ENCODE measurements at regions of chr3 and their contacts with region 1.

Region 1: GRCh38 chr3:141575879-141576743 is 89.3 kb downstream of the RASA2 start:
- DNase-seq: peak in 4 of 9 donors; percentile 14 to 44 (median 41)
- ATAC-seq: peak; percentile 82
- H3K4me3 ChIP-seq: no peak overlapping the region
- H3K4me3 Mint-ChIP-seq: peak overlapping the region in 8 of 10 donors; percentile 7 to 64 (median 48)
- H3K27ac ChIP-seq: peak overlapping the region; percentile 47
- H3K27ac Mint-ChIP-seq: peak overlapping the region; percentile 36 to 88 (median 69)
- H3K4me1 ChIP-seq: no peaks in the 10 kb centered on the region
- H3K4me1 Mint-ChIP-seq: peaks cover 8 to 17% (median 12%) of the 10 kb centered on the region in 7 donors
- H3K27me3 ChIP-seq: no peaks in the 10 kb centered on the region
- H3K27me3 Mint-ChIP-seq: no peaks in the 10 kb centered on the region

Region 2: GRCh38 chr3:141105828-141106628 is 470.1 kb before region 1 on chr3:
- CTCF ChIA-PET with region 1: no interaction called
- POLR2A ChIA-PET with region 1: no interaction called
- intact Hi-C with region 1: no loop called
- DNase-seq: peak in 8 of 9 donors; percentile 21 to 61 (median 50)
- ATAC-seq: peak; percentile 72
- H3K4me3 ChIP-seq: no peak overlapping the region
- H3K4me3 Mint-ChIP-seq: no peak overlapping the region
- H3K27ac ChIP-seq: no peak overlapping the region
- H3K27ac Mint-ChIP-seq: no peak overlapping the region
- H3K4me1 ChIP-seq: no peaks in the 10 kb centered on the region
- H3K4me1 Mint-ChIP-seq: peaks cover 0 to 5% (median 0%) of the 10 kb centered on the region in 7 donors
- H3K27me3 ChIP-seq: no peaks in the 10 kb centered on the region
- H3K27me3 Mint-ChIP-seq: peaks cover 0 to 6% (median 0%) of the 10 kb centered on the region in 5 donors

Region 3: DNA sequence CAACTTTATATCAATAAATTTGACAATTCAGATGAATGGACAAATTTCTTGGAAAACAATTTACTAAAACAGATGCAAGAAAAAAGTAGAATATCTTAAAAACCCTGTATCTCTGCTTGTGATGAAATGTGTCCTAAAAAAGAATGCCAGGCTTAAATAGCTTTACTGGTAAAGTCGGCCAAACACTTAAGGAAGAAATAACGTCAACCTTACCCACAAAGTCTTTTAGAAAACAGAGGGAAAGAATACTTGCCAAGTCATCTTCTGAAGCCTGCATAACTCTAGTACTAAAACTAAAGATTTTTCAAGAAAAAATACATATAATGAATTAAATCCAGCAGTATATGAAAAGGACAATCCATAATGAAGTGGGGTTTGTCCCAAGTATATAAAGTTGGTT is 21.8 kb after region 1 on chr3:
- CTCF ChIA-PET with region 1: interaction called, 3 read pairs
- POLR2A ChIA-PET with region 1: no interaction called
- intact Hi-C with region 1: loop called in 1 of 2 experiments (anchors 2 kb)
- DNase-seq: no peak
- ATAC-seq: no peak
- H3K4me3 ChIP-seq: no peak overlapping the region
- H3K4me3 Mint-ChIP-seq: no peak overlapping the region
- H3K27ac ChIP-seq: no peak overlapping the region
- H3K27ac Mint-ChIP-seq: peak overlapping the region in 3 of 9 donors; percentile 49 to 64 (median 57)
- H3K4me1 ChIP-seq: no peaks in the 10 kb centered on the region
- H3K4me1 Mint-ChIP-seq: peaks cover 0 to 4% (median 0%) of the 10 kb centered on the region in 7 donors
- H3K27me3 ChIP-seq: no peaks in the 10 kb centered on the region
- H3K27me3 Mint-ChIP-seq: no peaks in the 10 kb centered on the region

Region 4: GRCh38 chr3:141644931-141645330 is 68.8 kb after region 1 on chr3:
- CTCF ChIA-PET with region 1: no interaction called
- POLR2A ChIA-PET with region 1: no interaction called
- intact Hi-C with region 1: loop called (anchors 2 to 5 kb)
- DNase-seq: peak; percentile 8 to 76 (median 43)
- ATAC-seq: peak; percentile 90
- H3K4me3 ChIP-seq: no peak overlapping the region
- H3K4me3 Mint-ChIP-seq: no peak overlapping the region
- H3K27ac ChIP-seq: no peak overlapping the region
- H3K27ac Mint-ChIP-seq: peak overlapping the region in 1 of 9 donors; percentile 52
- H3K4me1 ChIP-seq: no peaks in the 10 kb centered on the region
- H3K4me1 Mint-ChIP-seq: peaks cover 0 to 7% (median 0%) of the 10 kb centered on the region in 7 donors
- H3K27me3 ChIP-seq: no peaks in the 10 kb centered on the region
- H3K27me3 Mint-ChIP-seq: peaks cover 0 to 4% (median 0%) of the 10 kb centered on the region in 5 donors

Region 5: GRCh38 chr3:141845407-141846049 is 269.4 kb after region 1 on chr3:
- CTCF ChIA-PET with region 1: no interaction called
- POLR2A ChIA-PET with region 1: no interaction called
- intact Hi-C with region 1: loop called in 1 of 2 experiments (anchors 1 kb)
- DNase-seq: peak in 7 of 9 donors; percentile 10 to 46 (median 25)
- ATAC-seq: peak; percentile 55
- H3K4me3 ChIP-seq: no peak overlapping the region
- H3K4me3 Mint-ChIP-seq: no peak overlapping the region
- H3K27ac ChIP-seq: no peak overlapping the region
- H3K27ac Mint-ChIP-seq: peak overlapping the region in 2 of 9 donors; percentile 36 to 42
- H3K4me1 ChIP-seq: no peaks in the 10 kb centered on the region
- H3K4me1 Mint-ChIP-seq: peaks cover 4 to 18% (median 9%) of the 10 kb centered on the region in 7 donors
- H3K27me3 ChIP-seq: no peaks in the 10 kb centered on the region
- H3K27me3 Mint-ChIP-seq: peaks cover 0 to 6% (median 5%) of the 10 kb centered on the region in 5 donors

Region 6: DNA sequence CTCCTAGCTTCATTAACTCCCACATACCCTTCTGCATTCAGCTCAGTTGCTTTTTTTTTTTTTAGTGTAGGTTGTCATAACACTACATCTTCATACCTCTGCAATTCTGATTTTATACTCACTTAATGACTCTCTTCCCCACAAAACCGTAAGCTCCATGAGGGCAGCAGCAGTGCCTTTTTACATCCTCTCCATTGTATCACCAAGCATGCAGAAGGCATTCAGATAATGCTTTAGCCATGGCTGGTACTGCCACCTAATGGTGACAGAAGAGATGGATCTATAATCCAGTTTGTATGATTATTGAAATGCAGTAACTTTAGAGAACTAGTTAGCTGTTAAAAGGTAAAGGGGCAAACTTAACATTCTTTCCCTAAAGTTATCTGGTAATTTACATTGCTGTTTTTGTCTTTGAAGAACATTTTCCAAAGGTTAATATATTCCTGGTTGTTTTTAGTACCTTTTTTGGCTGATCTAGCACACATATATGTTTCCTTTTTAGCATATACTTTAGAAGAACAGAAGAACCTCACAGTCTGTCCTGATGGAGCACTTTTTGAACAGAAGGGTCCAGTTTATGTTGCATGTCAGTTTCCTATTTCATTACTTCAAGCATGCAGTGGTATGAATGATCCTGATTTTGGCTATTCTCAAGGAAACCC is 337.2 kb after region 1 on chr3:
- CTCF ChIA-PET with region 1: interaction called, 6 read pairs
- POLR2A ChIA-PET with region 1: no interaction called
- intact Hi-C with region 1: loop called (anchors 1 kb)
- DNase-seq: peak in 7 of 9 donors; percentile 40 to 72 (median 60)
- ATAC-seq: peak; percentile 93
- H3K4me3 ChIP-seq: no peak overlapping the region
- H3K4me3 Mint-ChIP-seq: no peak overlapping the region
- H3K27ac ChIP-seq: no peak overlapping the region
- H3K27ac Mint-ChIP-seq: peak overlapping the region in 2 of 9 donors; percentile 11 to 18
- H3K4me1 ChIP-seq: no peaks in the 10 kb centered on the region
- H3K4me1 Mint-ChIP-seq: peaks cover 0 to 5% (median 3%) of the 10 kb centered on the region in 7 donors
- H3K27me3 ChIP-seq: no peaks in the 10 kb centered on the region
- H3K27me3 Mint-ChIP-seq: no peaks in the 10 kb centered on the region

Region 7: GRCh38 chr3:141998669-141999290 is 422.7 kb after region 1 on chr3:
- CTCF ChIA-PET with region 1: no interaction called
- POLR2A ChIA-PET with region 1: no interaction called
- intact Hi-C with region 1: loop called (anchors 1 kb)
- DNase-seq: peak in 3 of 9 donors; percentile 2 to 19 (median 10)
- ATAC-seq: no peak
- H3K4me3 ChIP-seq: no peak overlapping the region
- H3K4me3 Mint-ChIP-seq: no peak overlapping the region
- H3K27ac ChIP-seq: no peak overlapping the region
- H3K27ac Mint-ChIP-seq: no peak overlapping the region
- H3K4me1 ChIP-seq: no peaks in the 10 kb centered on the region
- H3K4me1 Mint-ChIP-seq: peaks cover 0 to 2% (median 0%) of the 10 kb centered on the region in 7 donors
- H3K27me3 ChIP-seq: no peaks in the 10 kb centered on the region
- H3K27me3 Mint-ChIP-seq: no peaks in the 10 kb centered on the region